Heart right ventricle (tissue), 16 donors: ENCODE measurements at regions of chr1 and their contacts with region 1.

Region 1: GRCh38 chr1:189939967-189940366 is 537.7 kb downstream of the BRINP3 start:
- DNase-seq: no peak
- ATAC-seq: no peak
- H3K4me3 ChIP-seq: no peak overlapping the region
- H3K27ac ChIP-seq: no peak overlapping the region
- H3K4me1 ChIP-seq: no peaks in the 10 kb centered on the region
- H3K27me3 ChIP-seq: no peaks in the 10 kb centered on the region
- CTCF ChIP-seq: no peak

Region 2: GRCh38 chr1:189821833-189822232 is 118.1 kb before region 1 on chr1:
- intact Hi-C with region 1: no loop called
- DNase-seq: no peak
- ATAC-seq: no peak
- H3K4me3 ChIP-seq: no peak overlapping the region
- H3K27ac ChIP-seq: no peak overlapping the region
- H3K4me1 ChIP-seq: no peaks in the 10 kb centered on the region
- H3K27me3 ChIP-seq: no peaks in the 10 kb centered on the region
- CTCF ChIP-seq: no peak

Region 3: DNA sequence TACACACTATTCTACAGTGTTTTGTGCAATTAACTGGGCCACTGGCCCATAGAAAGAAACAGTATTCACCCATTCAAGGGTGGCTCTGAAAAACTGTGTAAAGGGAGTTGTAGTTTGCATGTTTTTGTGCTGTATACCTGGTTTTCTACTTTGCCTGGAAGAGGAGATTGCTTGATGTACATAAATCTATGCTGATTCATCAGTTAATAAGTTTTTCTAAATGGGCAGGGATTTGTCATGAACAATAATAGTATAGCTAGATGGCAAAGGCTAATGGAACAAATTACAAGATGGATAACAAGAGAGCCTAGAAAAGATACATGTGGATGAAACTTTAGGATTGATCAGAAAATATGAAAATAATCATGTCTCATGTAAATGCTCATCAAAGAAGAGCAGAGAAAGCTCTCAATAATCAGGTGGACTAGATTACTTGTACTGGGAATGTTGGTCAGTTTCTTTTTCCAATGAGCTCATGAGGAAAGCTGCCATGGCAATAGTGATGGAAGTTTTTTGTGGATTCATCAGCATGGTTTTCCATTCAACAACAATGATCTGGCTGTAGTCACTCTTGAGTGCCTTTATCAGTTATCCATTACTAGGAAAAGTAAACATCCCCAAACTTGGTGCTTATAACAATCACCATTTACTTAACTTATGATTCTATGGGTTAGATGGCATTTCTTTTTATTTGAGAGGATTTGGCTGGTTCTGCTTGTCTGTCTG is 65.1 kb before region 1 on chr1:
- intact Hi-C with region 1: loop called in 1 of 10 experiments (anchors 10 kb)
- DNase-seq: no peak
- ATAC-seq: no peak
- H3K4me3 ChIP-seq: no peak overlapping the region
- H3K27ac ChIP-seq: no peak overlapping the region
- H3K4me1 ChIP-seq: no peaks in the 10 kb centered on the region
- H3K27me3 ChIP-seq: no peaks in the 10 kb centered on the region
- CTCF ChIP-seq: no peak